Gastrocnemius medialis (tissue), 4 donors: ENCODE measurements at regions of chr4 and their contacts with region 1.

Region 1: GRCh38 chr4:173370477-173371291 is at the start of gene SAP30:
- DNase-seq: peak; percentile 98 to 99
- ATAC-seq: peak; percentile 81 to 85
- H3K4me3 ChIP-seq: peak within 1 kb of the TSS; percentile 71 to 86 (median 80)
- H3K27ac ChIP-seq: peak within 1 kb of the TSS; percentile 96 to 99 (median 97)
- H3K4me1 ChIP-seq: peaks cover 0 to 9% of the 10 kb centered on the region in 2 donors
- H3K27me3 ChIP-seq: no peaks in the 10 kb centered on the region
- CTCF ChIP-seq: no peak
- POLR2A ChIP-seq: peak; percentile 95 to 99
- total RNA-seq, gene SAP30: 13.3 to 24.8 (median 18.2) TPM

Region 2: GRCh38 chr4:173252024-173252935 is 118.4 kb before region 1 on chr4:
- in situ Hi-C with region 1: no loop called
- intact Hi-C with region 1: loop called (anchors 5 kb)
- DNase-seq: peak; percentile 79 to 81
- ATAC-seq: peak; percentile 100
- H3K4me3 ChIP-seq: no peak overlapping the region
- H3K27ac ChIP-seq: peak overlapping the region in 3 of 4 donors; percentile 48 to 70 (median 58)
- H3K4me1 ChIP-seq: peaks cover 4 to 7% of the 10 kb centered on the region in 2 donors
- H3K27me3 ChIP-seq: no peaks in the 10 kb centered on the region
- CTCF ChIP-seq: no peak
- POLR2A ChIP-seq: no peak

Region 3: GRCh38 chr4:173334085-173334772 is 36.5 kb before region 1 on chr4 and contains the start of gene HMGB2:
- in situ Hi-C with region 1: loop called in 2 of 4 experiments (anchors 5 kb)
- intact Hi-C with region 1: loop called (anchors 1 kb)
- DNase-seq: peak; percentile 100
- ATAC-seq: peak; percentile 95 to 96
- H3K4me3 ChIP-seq: peak within 1 kb of the TSS; percentile 83 to 98 (median 92)
- H3K27ac ChIP-seq: peak within 1 kb of the TSS; percentile 94 to 99 (median 98)
- H3K4me1 ChIP-seq: peaks cover 8 to 20% of the 10 kb centered on the region in 2 donors
- H3K27me3 ChIP-seq: no peaks in the 10 kb centered on the region
- CTCF ChIP-seq: no peak
- POLR2A ChIP-seq: peak; percentile 93 to 98
- total RNA-seq, gene HMGB2: 4.1 to 61.6 (median 21.2) TPM

Region 4: DNA sequence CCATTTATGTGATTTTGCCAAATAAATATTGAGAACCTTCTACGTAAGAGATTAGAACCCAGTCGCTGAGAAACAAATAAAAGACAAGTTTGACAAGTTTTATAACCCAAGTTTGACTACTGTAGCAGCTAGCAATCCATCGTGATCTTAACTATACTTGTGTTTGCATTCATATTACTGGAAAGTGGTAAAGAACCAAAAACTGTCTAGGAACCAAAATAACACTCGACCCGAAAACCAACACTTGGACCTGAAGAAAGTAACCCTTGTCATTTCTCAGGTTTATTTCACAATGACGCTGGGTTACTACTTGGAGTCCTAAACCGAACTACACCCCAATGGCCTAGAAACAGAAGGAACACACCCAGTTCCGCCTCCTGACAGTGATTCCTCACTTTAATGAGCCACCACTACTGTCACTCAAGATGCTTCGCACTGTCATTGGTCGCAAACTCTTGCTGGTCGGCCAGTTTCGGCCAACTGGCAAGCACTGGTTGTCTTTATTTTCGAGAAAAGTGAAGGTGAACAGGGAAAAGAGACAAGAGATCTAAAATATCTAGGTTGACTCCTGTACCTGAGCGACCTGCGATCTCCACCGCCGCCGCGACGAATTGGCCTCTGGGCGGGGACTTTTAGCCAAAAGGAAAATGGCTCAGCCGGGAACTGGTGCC is 912.3 kb after region 1 on chr4:
- in situ Hi-C with region 1: loop called in 1 of 4 experiments (anchors 25 kb)
- intact Hi-C with region 1: no loop called
- DNase-seq: peak; percentile 88
- ATAC-seq: peak; percentile 98 to 99
- H3K4me3 ChIP-seq: peak overlapping the region; percentile 79 to 91 (median 84)
- H3K27ac ChIP-seq: peak overlapping the region; percentile 96 to 99 (median 98)
- H3K4me1 ChIP-seq: peaks cover 39 to 41% of the 10 kb centered on the region in 2 donors
- H3K27me3 ChIP-seq: no peaks in the 10 kb centered on the region
- CTCF ChIP-seq: no peak
- POLR2A ChIP-seq: no peak